ENCODE measurements at regions of chr7 and their contacts with region 1.

Region 1: DNA sequence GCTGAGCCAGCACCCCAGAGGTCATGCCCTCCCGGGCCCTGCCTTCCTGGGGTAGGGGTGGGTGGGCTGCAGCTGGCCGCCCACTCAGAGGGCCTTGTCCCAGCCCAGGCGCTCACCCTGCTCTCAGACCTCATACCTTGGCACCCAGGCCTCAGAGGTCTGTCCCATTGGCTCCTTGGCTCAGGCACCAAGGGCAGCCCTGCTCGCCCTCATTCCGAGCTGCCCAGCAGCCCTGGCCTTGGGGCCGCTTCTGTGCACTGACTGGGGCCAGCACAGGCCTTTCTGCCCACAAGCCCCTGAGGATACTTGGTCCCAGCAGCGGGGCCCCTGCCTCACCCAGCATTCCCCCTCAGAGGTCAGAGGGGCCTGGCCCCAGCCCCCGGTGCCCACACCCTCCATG is 34.3 kb downstream of the YKT6 start:
- DNase-seq: no peak
- ATAC-seq: no peak
- H3K4me3 Mint-ChIP-seq: no peak overlapping the region
- H3K27ac Mint-ChIP-seq: no peak overlapping the region
- H3K4me1 Mint-ChIP-seq: no peaks in the 10 kb centered on the region
- H3K27me3 Mint-ChIP-seq: no peaks in the 10 kb centered on the region
- CTCF ChIP-seq: no peak

Region 2: GRCh38 chr7:44065436-44066118 is 169.5 kb before region 1 on chr7 and contains the start of gene PGAM2:
- CTCF ChIA-PET with region 1: no interaction called
- POLR2A ChIA-PET with region 1: no interaction called
- intact Hi-C with region 1: no loop called
- DNase-seq: no peak
- ATAC-seq: peak; percentile 32
- H3K4me3 Mint-ChIP-seq: peak within 1 kb of the TSS; percentile 28
- H3K27ac Mint-ChIP-seq: peak within 1 kb of the TSS; percentile 72
- H3K4me1 Mint-ChIP-seq: peaks cover 65% of the 10 kb centered on the region
- H3K27me3 Mint-ChIP-seq: no peaks in the 10 kb centered on the region
- CTCF ChIP-seq: no peak
- total RNA-seq, gene PGAM2: 1.1 and 1.2 TPM in 2 replicates

Region 3: GRCh38 chr7:44333911-44334733 is 99.1 kb after region 1 on chr7:
- CTCF ChIA-PET with region 1: no interaction called
- POLR2A ChIA-PET with region 1: no interaction called
- intact Hi-C with region 1: no loop called
- DNase-seq: no peak
- ATAC-seq: no peak
- H3K4me3 Mint-ChIP-seq: no peak overlapping the region
- H3K27ac Mint-ChIP-seq: no peak overlapping the region
- H3K4me1 Mint-ChIP-seq: peaks cover 14% of the 10 kb centered on the region
- H3K27me3 Mint-ChIP-seq: peaks cover 3% of the 10 kb centered on the region
- CTCF ChIP-seq: no peak

Region 4: GRCh38 chr7:44431091-44431608 is 196.1 kb after region 1 on chr7:
- CTCF ChIA-PET with region 1: no interaction called
- POLR2A ChIA-PET with region 1: interaction called, 14 read pairs
- intact Hi-C with region 1: no loop called
- DNase-seq: no peak
- ATAC-seq: peak; percentile 45
- H3K4me3 Mint-ChIP-seq: no peak overlapping the region
- H3K27ac Mint-ChIP-seq: no peak overlapping the region
- H3K4me1 Mint-ChIP-seq: peaks cover 42% of the 10 kb centered on the region
- H3K27me3 Mint-ChIP-seq: no peaks in the 10 kb centered on the region
- CTCF ChIP-seq: no peak